ENCODE measurements at regions of chr22 and their contacts with region 1.

Region 1: DNA sequence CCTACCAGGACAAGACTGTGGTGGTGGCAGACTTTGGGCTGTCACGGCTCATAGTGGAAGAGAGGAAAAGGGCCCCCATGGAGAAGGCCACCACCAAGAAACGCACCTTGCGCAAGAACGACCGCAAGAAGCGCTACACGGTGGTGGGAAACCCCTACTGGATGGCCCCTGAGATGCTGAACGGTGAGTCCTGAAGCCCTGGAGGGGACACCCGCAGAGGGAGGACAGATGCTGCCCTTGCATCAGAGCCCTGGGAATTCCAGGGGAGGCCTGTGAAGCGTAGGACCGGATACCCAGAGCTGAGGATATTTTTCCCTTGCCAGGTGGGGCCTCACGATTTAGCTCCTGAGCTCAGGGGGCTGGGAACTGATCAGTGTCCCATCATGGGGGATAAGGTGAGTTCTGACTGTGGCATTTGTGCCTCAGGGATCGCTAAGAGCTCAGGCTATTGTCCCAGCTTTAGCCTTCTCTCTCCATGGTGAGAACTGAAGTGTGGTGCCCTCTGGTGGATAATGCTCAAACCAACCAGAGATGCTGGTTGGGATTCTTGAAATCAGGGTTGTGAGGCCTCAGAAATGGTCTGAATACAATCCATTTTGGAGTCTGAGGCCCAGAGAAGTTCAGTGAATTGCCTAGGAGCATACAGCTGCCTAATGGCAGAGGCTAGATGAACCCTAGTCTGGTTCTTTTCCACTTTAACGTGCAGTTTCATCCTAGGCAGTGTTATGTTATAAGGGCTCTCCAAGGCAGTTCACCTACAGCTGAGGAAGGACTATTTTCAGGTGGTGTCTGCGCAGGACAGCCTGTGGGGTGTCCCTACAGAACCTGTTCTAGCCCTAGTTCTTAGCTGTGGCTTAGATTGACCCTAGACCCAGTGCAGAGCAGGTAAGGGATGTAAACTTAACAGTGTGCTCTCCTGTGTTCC is 19.5 kb downstream of the PIK3IP1 start:
- DNase-seq: peak in 8 of 9 experiments; percentile 44 to 76 (median 64)
- ATAC-seq: peak; percentile 76
- H3K4me3 ChIP-seq: no peak overlapping the region
- H3K4me3 Mint-ChIP-seq: no peak overlapping the region
- H3K27ac ChIP-seq: no peak overlapping the region
- H3K27ac Mint-ChIP-seq: peak overlapping the region; percentile 91
- H3K4me1 ChIP-seq: peaks cover 61% of the 10 kb centered on the region
- H3K4me1 Mint-ChIP-seq: peaks cover 63% of the 10 kb centered on the region
- H3K27me3 ChIP-seq: no peaks in the 10 kb centered on the region
- H3K27me3 Mint-ChIP-seq: no peaks in the 10 kb centered on the region
- CTCF ChIP-seq: peak; percentile 63

Region 2: GRCh38 chr22:30277547-30278344 is 995.0 kb before region 1 on chr22:
- CTCF ChIA-PET with region 1: no interaction called
- POLR2A ChIA-PET with region 1: no interaction called
- intact Hi-C with region 1: no loop called
- DNase-seq: no peak
- ATAC-seq: no peak
- H3K4me3 ChIP-seq: no peak overlapping the region
- H3K4me3 Mint-ChIP-seq: no peak overlapping the region
- H3K27ac ChIP-seq: no peak overlapping the region
- H3K27ac Mint-ChIP-seq: no peak overlapping the region
- H3K4me1 ChIP-seq: peaks cover 25% of the 10 kb centered on the region
- H3K4me1 Mint-ChIP-seq: peaks cover 31% of the 10 kb centered on the region
- H3K27me3 ChIP-seq: no peaks in the 10 kb centered on the region
- H3K27me3 Mint-ChIP-seq: no peaks in the 10 kb centered on the region
- CTCF ChIP-seq: no peak

Region 3: DNA sequence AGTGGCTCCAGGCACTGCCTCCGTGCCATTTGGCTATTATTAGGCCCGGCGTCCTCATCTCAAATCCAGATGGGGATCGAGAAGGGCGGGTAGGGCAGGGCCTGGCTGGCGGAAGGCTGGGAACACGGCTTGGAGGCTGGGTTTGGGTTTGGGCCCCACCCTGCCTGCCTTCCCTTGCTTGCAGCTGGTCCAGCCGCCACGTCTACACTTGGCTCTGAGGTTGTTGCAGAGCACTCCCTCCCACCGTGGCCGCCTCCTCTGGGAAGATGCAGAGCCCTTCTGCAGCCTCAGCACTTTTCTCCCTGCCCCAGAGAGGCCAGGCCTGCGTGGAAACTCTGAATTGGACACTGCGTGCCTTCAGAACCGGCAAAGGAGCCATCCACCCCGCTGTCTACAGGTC is 196.8 kb before region 1 on chr22:
- CTCF ChIA-PET with region 1: no interaction called
- POLR2A ChIA-PET with region 1: no interaction called
- intact Hi-C with region 1: no loop called
- DNase-seq: no peak
- ATAC-seq: no peak
- H3K4me3 ChIP-seq: no peak overlapping the region
- H3K4me3 Mint-ChIP-seq: no peak overlapping the region
- H3K27ac ChIP-seq: no peak overlapping the region
- H3K27ac Mint-ChIP-seq: no peak overlapping the region
- H3K4me1 ChIP-seq: no peaks in the 10 kb centered on the region
- H3K4me1 Mint-ChIP-seq: peaks cover 5% of the 10 kb centered on the region
- H3K27me3 ChIP-seq: no peaks in the 10 kb centered on the region
- H3K27me3 Mint-ChIP-seq: no peaks in the 10 kb centered on the region
- CTCF ChIP-seq: no peak

Region 4: DNA sequence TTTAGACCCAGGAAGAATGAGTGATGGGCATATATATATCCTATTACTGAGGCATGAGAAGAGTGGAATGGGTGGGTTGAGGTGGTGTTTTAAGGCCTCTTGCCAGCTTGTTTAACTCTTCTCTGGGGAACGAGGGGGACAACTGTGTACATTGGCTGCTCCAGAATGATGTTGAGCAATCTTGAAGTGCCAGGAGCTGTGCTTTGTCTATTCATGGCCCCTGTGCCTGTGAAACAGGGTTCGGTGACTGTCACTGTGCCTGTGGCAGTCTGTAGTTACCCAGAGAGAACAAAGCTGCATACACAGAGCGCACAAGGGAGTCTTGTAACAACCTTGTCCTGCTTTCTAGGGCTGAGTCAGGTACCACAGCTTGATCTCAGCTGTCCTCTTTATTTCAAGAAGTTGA is 49.0 kb before region 1 on chr22:
- CTCF ChIA-PET with region 1: interaction called, 14 read pairs
- POLR2A ChIA-PET with region 1: no interaction called
- intact Hi-C with region 1: no loop called
- DNase-seq: no peak
- ATAC-seq: no peak
- H3K4me3 ChIP-seq: no peak overlapping the region
- H3K4me3 Mint-ChIP-seq: no peak overlapping the region
- H3K27ac ChIP-seq: no peak overlapping the region
- H3K27ac Mint-ChIP-seq: no peak overlapping the region
- H3K4me1 ChIP-seq: no peaks in the 10 kb centered on the region
- H3K4me1 Mint-ChIP-seq: peaks cover 20% of the 10 kb centered on the region
- H3K27me3 ChIP-seq: no peaks in the 10 kb centered on the region
- H3K27me3 Mint-ChIP-seq: no peaks in the 10 kb centered on the region
- CTCF ChIP-seq: no peak

Region 5: GRCh38 chr22:31253949-31254348 is 18.8 kb before region 1 on chr22:
- CTCF ChIA-PET with region 1: interaction called, 32 read pairs
- POLR2A ChIA-PET with region 1: interaction called, 9 read pairs
- intact Hi-C with region 1: no loop called
- DNase-seq: no peak
- ATAC-seq: no peak
- H3K4me3 ChIP-seq: no peak overlapping the region
- H3K4me3 Mint-ChIP-seq: no peak overlapping the region
- H3K27ac ChIP-seq: no peak overlapping the region
- H3K27ac Mint-ChIP-seq: no peak overlapping the region
- H3K4me1 ChIP-seq: peaks cover 2% of the 10 kb centered on the region
- H3K4me1 Mint-ChIP-seq: peaks cover 7% of the 10 kb centered on the region
- H3K27me3 ChIP-seq: no peaks in the 10 kb centered on the region
- H3K27me3 Mint-ChIP-seq: no peaks in the 10 kb centered on the region
- CTCF ChIP-seq: no peak

Region 6: GRCh38 chr22:31284281-31285155 is 11.7 kb after region 1 on chr22:
- CTCF ChIA-PET with region 1: interaction called, 84 read pairs
- POLR2A ChIA-PET with region 1: interaction called, 608 read pairs
- intact Hi-C with region 1: no loop called
- DNase-seq: peak in 1 of 9 experiments; percentile 22
- ATAC-seq: no peak
- H3K4me3 ChIP-seq: peak overlapping the region in 1 of 2 experiments; percentile 19
- H3K4me3 Mint-ChIP-seq: peak overlapping the region; percentile 55
- H3K27ac ChIP-seq: peak overlapping the region; percentile 99
- H3K27ac Mint-ChIP-seq: peak overlapping the region; percentile 100
- H3K4me1 ChIP-seq: peaks cover 99% of the 10 kb centered on the region
- H3K4me1 Mint-ChIP-seq: peaks cover 93% of the 10 kb centered on the region
- H3K27me3 ChIP-seq: no peaks in the 10 kb centered on the region
- H3K27me3 Mint-ChIP-seq: no peaks in the 10 kb centered on the region
- CTCF ChIP-seq: no peak

Region 7: DNA sequence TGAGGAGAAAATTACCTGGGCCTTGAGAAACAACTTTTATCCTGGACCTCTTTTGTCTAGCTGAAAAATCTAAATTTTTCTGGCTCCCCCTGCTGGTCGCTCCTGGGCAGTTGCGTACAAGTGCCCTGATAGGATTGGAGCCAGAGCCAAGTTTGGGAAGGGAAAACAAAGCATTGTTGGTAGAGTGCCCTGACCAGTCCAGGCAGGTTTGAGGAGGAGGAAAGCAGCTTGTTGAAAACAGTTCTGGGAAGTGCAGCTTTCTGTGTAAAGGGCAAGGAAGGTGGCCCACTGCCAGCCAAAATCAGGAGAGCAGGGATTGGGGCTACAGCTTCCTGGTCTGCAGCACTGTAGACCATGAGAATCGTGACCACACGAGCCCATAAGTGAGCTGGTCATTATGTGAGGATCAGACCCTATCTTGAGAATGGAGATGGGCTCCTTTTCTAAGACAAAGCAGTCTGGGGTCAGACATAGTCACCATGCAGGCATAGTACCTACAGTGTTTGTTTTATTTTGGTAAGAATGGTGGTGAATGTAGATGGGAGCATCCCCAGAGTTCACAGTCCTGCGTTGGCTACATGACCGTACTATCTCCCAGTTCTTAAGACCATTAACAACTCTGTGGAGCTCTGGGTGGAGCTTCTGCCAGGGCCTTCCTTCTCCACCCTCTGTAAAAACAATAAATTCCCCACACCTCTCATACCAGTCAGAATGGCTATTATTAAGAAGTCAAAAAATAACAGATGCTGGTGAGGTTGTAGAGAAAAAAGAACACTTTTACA is 40.8 kb after region 1 on chr22:
- CTCF ChIA-PET with region 1: interaction called, 29 read pairs
- POLR2A ChIA-PET with region 1: interaction called, 6 read pairs
- intact Hi-C with region 1: loop called (anchors 2 to 5 kb)
- DNase-seq: peak; percentile 37 to 82 (median 68)
- ATAC-seq: peak; percentile 84
- H3K4me3 ChIP-seq: no peak overlapping the region
- H3K4me3 Mint-ChIP-seq: no peak overlapping the region
- H3K27ac ChIP-seq: no peak overlapping the region
- H3K27ac Mint-ChIP-seq: no peak overlapping the region
- H3K4me1 ChIP-seq: peaks cover 13% of the 10 kb centered on the region
- H3K4me1 Mint-ChIP-seq: peaks cover 9% of the 10 kb centered on the region
- H3K27me3 ChIP-seq: no peaks in the 10 kb centered on the region
- H3K27me3 Mint-ChIP-seq: no peaks in the 10 kb centered on the region
- CTCF ChIP-seq: peak; percentile 82

Region 8: DNA sequence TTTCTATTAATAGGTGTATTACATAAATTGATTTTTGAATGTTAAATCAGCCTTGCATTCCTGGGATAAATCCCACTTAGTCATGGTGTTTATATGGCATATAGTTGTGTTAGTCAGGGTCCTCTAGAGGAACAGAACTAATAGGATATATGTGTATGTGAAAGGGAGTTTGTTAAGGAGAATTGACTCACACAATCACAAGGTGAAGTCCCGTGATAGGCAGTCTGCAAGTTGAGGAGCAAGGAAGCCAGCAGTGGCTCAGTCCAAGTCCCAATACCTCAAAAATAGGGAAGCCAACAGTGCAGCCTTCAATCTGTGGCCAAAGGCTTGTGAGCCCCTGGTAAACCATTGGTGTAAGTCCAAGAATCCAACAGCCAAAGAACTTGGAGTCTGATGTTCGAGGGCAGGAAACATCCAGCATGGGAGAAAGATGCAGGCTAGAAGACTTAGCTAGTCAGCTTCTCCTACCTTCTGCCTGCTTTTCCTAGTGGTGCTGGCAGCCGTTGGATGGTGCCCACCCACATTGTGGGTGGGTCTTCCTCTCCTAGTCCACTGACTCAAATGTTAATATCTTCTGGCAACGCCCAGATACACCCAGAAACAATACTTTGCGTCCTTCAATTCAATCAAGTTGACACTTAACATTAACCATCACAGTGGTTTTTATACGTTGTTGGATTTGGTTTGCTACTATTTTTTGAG is 236.4 kb after region 1 on chr22:
- CTCF ChIA-PET with region 1: no interaction called
- POLR2A ChIA-PET with region 1: no interaction called
- intact Hi-C with region 1: no loop called
- DNase-seq: peak in 1 of 9 experiments; percentile 25
- ATAC-seq: no peak
- H3K4me3 ChIP-seq: no peak overlapping the region
- H3K4me3 Mint-ChIP-seq: no peak overlapping the region
- H3K27ac ChIP-seq: peak overlapping the region in 1 of 2 experiments; percentile 6
- H3K27ac Mint-ChIP-seq: peak overlapping the region; percentile 10
- H3K4me1 ChIP-seq: peaks cover 4% of the 10 kb centered on the region
- H3K4me1 Mint-ChIP-seq: peaks cover 43% of the 10 kb centered on the region
- H3K27me3 ChIP-seq: no peaks in the 10 kb centered on the region
- H3K27me3 Mint-ChIP-seq: no peaks in the 10 kb centered on the region
- CTCF ChIP-seq: no peak

Region 9: DNA sequence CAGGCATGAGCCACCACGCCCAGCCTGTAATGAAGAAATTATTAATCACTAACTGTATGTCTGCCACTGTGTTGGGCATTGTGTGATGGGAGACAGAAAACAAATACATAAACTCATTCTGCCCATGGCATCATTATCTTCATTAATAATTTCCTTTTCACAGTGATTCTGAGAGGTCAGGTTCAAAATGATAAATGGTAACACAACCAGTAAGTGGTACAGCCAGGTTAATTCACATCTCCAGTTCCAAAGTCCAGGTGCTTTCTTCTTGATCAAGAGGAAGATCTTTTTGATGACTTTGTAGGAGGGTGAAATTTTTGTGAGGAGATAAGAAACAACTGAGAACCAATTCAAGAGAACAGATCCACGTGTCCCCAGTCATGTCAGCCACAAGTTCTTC is 322.5 kb after region 1 on chr22:
- CTCF ChIA-PET with region 1: no interaction called
- POLR2A ChIA-PET with region 1: no interaction called
- intact Hi-C with region 1: no loop called
- DNase-seq: no peak
- ATAC-seq: no peak
- H3K4me3 ChIP-seq: no peak overlapping the region
- H3K4me3 Mint-ChIP-seq: no peak overlapping the region
- H3K27ac ChIP-seq: no peak overlapping the region
- H3K27ac Mint-ChIP-seq: peak overlapping the region; percentile 20
- H3K4me1 ChIP-seq: no peaks in the 10 kb centered on the region
- H3K4me1 Mint-ChIP-seq: no peaks in the 10 kb centered on the region
- H3K27me3 ChIP-seq: no peaks in the 10 kb centered on the region
- H3K27me3 Mint-ChIP-seq: no peaks in the 10 kb centered on the region
- CTCF ChIP-seq: no peak

Measured in CD8-positive, alpha-beta T cell (primary cell).